ENCODE measurements at regions of chr1 and their contacts with region 1.

Region 1: GRCh38 chr1:224700915-224701531 is 84.9 kb downstream of the CNIH3 start:
- DNase-seq: no peak
- ATAC-seq: no peak
- H3K4me3 ChIP-seq: no peak overlapping the region
- H3K4me3 Mint-ChIP-seq: no peak overlapping the region
- H3K27ac ChIP-seq: no peak overlapping the region
- H3K27ac Mint-ChIP-seq: no peak overlapping the region
- H3K4me1 ChIP-seq: no peaks in the 10 kb centered on the region
- H3K4me1 Mint-ChIP-seq: no peaks in the 10 kb centered on the region
- H3K27me3 ChIP-seq: no peaks in the 10 kb centered on the region
- H3K27me3 Mint-ChIP-seq: peaks cover 0 to 8% (median 2%) of the 10 kb centered on the region in 5 donors

Region 2: DNA sequence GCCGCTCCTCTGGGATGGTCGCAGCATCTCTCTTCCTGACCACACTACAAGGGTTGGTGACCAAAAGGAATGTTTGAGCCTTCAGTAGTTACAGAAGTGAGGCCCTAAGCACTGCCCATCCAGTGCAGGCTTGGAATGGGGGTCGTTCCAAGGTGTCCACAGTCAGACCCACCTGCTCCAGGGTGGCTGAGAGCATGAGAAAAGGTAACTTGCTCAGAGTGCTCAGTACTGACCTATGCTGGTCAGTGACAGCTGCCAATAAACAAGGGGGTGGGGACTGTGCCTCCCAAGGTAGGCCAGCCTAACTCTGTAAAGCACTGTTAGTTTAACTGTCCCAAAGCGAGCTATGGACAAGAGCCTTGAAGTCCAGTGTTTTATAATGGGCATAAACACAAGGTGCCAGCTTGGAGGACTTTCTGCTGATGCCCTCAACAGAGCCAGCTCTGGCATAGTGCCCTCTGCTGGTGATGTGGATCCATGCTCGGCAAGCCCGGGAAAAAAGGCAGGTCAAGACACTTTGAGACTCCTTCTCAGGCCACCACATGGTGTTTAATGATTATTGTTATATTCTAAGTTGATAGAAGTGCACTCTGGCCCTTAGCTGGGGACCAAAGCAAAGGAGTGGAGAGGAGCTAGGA is 150.3 kb after region 1 on chr1:
- CTCF ChIA-PET with region 1: no interaction called
- POLR2A ChIA-PET with region 1: no interaction called
- intact Hi-C with region 1: loop called in 1 of 2 experiments (anchors 5 kb)
- DNase-seq: peak in 7 of 9 donors; percentile 3 to 51 (median 17)
- ATAC-seq: peak; percentile 38
- H3K4me3 ChIP-seq: no peak overlapping the region
- H3K4me3 Mint-ChIP-seq: no peak overlapping the region
- H3K27ac ChIP-seq: no peak overlapping the region
- H3K27ac Mint-ChIP-seq: no peak overlapping the region
- H3K4me1 ChIP-seq: no peaks in the 10 kb centered on the region
- H3K4me1 Mint-ChIP-seq: peaks cover 0 to 2% (median 0%) of the 10 kb centered on the region in 7 donors
- H3K27me3 ChIP-seq: no peaks in the 10 kb centered on the region
- H3K27me3 Mint-ChIP-seq: peaks cover 0 to 17% (median 9%) of the 10 kb centered on the region in 5 donors